Pancreas (tissue), 10 donors: ENCODE measurements at regions of chr7 and their contacts with region 1.

Region 1: DNA sequence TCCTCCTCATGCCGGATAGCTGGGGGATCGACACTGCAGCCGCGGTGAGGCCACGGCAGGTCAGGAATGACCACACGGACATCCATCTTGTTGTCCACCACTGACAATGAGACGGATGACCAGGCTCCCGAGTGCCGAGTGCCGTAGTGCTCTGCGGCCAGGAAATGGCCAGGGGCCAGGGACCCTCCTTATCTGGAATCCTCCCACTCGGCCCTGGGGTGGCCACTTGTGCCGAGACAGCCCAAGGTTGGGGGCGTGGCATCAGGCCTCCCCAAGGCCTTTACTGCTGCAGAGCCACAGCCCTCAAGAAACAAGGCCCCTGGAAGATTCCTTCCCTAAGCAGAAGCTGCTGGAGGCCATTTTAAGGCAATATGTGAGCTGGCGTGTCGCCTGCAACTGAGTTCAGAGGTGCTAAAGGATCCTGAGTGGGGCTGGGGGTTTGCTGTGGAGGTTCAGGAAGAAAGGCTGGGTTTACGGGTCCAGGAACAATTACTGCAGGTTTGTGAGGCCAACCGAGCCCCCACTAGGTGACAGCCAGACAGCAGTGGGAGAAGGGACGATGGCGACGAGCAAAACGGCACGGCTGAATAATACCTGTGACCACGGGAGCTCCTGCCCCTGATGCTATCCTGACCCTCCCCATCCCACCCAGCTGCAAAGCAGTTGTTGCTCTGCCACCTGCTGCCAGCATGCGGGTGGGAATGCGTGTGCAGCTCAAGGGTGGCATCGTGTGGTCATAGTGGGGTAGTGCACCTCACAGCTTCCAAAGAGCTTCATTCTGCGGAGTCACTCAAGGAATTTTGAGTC is 31.6 kb upstream of the LEP start:
- DNase-seq: peak; percentile 51 to 87 (median 76)
- ATAC-seq: peak; percentile 78 to 99 (median 96)
- H3K4me3 ChIP-seq: no peak overlapping the region
- H3K27ac ChIP-seq: no peak overlapping the region
- H3K4me1 ChIP-seq: no peaks in the 10 kb centered on the region
- H3K27me3 ChIP-seq: no peaks in the 10 kb centered on the region
- CTCF ChIP-seq: peak; percentile 92 to 97 (median 95)

Region 2: DNA sequence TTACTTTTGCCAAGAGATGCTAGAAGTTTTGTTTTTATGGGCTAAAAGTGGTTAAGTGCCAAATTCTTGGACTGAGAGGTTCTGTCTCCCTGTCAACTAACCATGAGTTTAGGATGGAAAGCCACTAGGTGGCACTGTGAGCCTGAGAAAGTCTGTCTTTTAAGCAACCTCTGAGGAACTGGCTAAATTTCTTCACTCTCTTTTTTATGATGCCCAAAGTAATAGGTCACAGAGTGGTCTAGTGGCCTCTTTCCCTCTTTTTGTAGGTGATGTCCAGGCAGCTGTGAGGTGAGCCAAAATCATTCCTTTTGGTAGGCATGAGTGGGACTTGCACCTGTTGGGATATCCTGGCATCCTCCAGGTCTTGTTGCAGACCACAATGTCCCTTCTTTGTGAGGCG is 500.6 kb before region 1 on chr7:
- intact Hi-C with region 1: loop called (anchors 5 to 10 kb)
- DNase-seq: peak in 4 of 6 donors; percentile 39 to 72 (median 52)
- ATAC-seq: peak; percentile 59 to 85 (median 82)
- H3K4me3 ChIP-seq: no peak overlapping the region
- H3K27ac ChIP-seq: no peak overlapping the region
- H3K4me1 ChIP-seq: no peaks in the 10 kb centered on the region
- H3K27me3 ChIP-seq: no peaks in the 10 kb centered on the region
- CTCF ChIP-seq: peak; percentile 9 to 56 (median 44)

Region 3: GRCh38 chr7:128131731-128132130 is 77.7 kb before region 1 on chr7:
- intact Hi-C with region 1: loop called in 1 of 3 experiments (anchors 5 kb)
- DNase-seq: no peak
- ATAC-seq: no peak
- H3K4me3 ChIP-seq: no peak overlapping the region
- H3K27ac ChIP-seq: no peak overlapping the region
- H3K4me1 ChIP-seq: peaks cover 0 to 6% (median 0%) of the 10 kb centered on the region in 3 donors
- H3K27me3 ChIP-seq: peaks cover 0 to 4% (median 0%) of the 10 kb centered on the region in 4 donors
- CTCF ChIP-seq: no peak